ENCODE measurements at regions of chr2 and their contacts with region 1.

Region 1: GRCh38 chr2:219029829-219030165 is 11.5 kb downstream of the CFAP65 start:
- DNase-seq: peak; percentile 74
- H3K4me3 ChIP-seq: no peak overlapping the region
- H3K27ac ChIP-seq: no peak overlapping the region
- H3K4me1 ChIP-seq: no peaks in the 10 kb centered on the region
- CTCF ChIP-seq: peak; percentile 90

Region 2: GRCh38 chr2:219119422-219120043 is 89.7 kb after region 1 on chr2:
- CTCF ChIA-PET with region 1: no interaction called
- POLR2A ChIA-PET with region 1: interaction called, 3 read pairs
- intact Hi-C with region 1: loop called (anchors 1 kb)
- DNase-seq: peak; percentile 62
- H3K4me3 ChIP-seq: no peak overlapping the region
- H3K27ac ChIP-seq: no peak overlapping the region
- H3K4me1 ChIP-seq: no peaks in the 10 kb centered on the region
- CTCF ChIP-seq: peak; percentile 92

Region 3: GRCh38 chr2:219155054-219155644 is 125.4 kb after region 1 on chr2:
- CTCF ChIA-PET with region 1: interaction called, 4 read pairs
- POLR2A ChIA-PET with region 1: interaction called, 3 read pairs
- intact Hi-C with region 1: loop called (anchors 1 kb)
- DNase-seq: peak; percentile 84
- H3K4me3 ChIP-seq: no peak overlapping the region
- H3K27ac ChIP-seq: no peak overlapping the region
- H3K4me1 ChIP-seq: peaks cover 5% of the 10 kb centered on the region
- CTCF ChIP-seq: peak; percentile 82

Measured in OCI-LY7 (cell line).